Panc1 (cell line): ENCODE measurements at regions of chr11 and their contacts with region 1.

Region 1: DNA sequence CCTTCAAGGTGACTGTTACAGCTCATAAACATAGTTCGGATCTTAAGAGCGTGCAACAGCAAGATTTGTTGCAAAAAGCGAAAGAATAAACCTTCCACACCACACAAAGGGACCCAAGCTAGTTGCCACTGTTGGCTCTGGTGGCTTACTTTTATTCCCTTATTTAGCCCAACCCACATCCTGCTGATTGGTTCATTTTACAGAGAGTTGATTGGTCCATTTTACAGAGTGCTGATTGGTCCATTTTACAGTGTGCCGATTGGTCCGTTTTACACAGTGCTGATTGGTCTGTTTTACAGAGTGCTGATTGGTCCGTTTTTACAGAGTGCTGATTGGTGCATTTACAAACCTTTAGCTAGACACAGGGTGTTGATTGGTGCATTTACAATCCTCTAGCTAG is 776.9 kb upstream of the CNTN5 start:
- DNase-seq: no peak
- ATAC-seq: no peak
- H3K4me3 ChIP-seq: no peak overlapping the region
- H3K27ac ChIP-seq: no peak overlapping the region
- H3K4me1 ChIP-seq: no peaks in the 10 kb centered on the region
- H3K27me3 ChIP-seq: no peaks in the 10 kb centered on the region
- CTCF ChIP-seq: no peak

Region 2: DNA sequence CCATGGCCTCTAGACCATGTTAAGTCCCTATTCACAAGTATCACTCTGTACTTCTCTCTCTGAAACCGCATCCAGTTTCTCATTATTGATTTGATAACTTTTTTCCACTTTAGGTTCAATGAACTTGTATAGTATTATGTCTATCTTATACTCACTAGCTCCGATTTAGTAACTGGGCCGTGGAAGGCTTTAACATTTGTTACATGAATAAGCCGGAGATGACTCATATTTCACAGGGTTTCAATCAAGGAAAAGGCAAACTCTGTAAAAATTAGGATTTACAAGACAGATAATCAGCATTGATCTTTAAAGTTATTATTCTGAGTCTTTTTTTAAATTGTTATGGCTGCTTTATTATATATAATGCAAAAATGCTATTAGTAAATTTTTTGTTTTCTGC is 114.7 kb after region 1 on chr11:
- CTCF ChIA-PET with region 1: interaction called, 10 read pairs
- POLR2A ChIA-PET with region 1: no interaction called
- in situ Hi-C with region 1: no loop called
- intact Hi-C with region 1: no loop called
- DNase-seq: no peak
- ATAC-seq: no peak
- H3K4me3 ChIP-seq: no peak overlapping the region
- H3K27ac ChIP-seq: no peak overlapping the region
- H3K4me1 ChIP-seq: no peaks in the 10 kb centered on the region
- H3K27me3 ChIP-seq: no peaks in the 10 kb centered on the region
- CTCF ChIP-seq: no peak